Panc1 (cell line): ENCODE measurements at regions of chr16 and their contacts with region 1.

Region 1: DNA sequence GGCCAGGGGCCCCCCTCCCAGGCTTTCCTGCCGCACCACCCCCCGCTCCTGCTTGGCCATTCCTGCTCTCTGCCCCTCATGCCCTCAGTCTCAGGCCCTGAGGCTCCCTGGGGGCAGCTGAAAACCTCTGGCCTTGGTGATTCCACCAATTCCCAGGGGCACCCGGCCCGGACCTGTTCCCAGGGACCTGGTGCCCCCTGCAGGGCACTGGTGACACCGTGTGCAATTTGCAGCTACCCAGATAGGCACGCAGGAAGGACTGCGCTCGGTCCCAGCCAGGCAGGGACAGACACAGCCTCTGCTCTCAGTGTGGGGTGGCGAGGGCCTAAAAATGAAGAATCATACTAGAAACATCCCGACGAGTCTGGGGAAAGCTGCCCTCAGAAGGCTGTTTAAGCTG is 13.4 kb downstream of the WFDC1 start:
- DNase-seq: no peak
- ATAC-seq: peak; percentile 92
- H3K4me3 ChIP-seq: no peak overlapping the region
- H3K27ac ChIP-seq: no peak overlapping the region
- H3K4me1 ChIP-seq: no peaks in the 10 kb centered on the region
- H3K27me3 ChIP-seq: no peaks in the 10 kb centered on the region; the same call in 1 of the 2 replicates
- CTCF ChIP-seq: peak; percentile 75; the same call in 1 of the 2 replicates

Region 2: GRCh38 chr16:84277237-84277823 is 30.8 kb before region 1 on chr16:
- CTCF ChIA-PET with region 1: interaction called, 10 read pairs
- POLR2A ChIA-PET with region 1: no interaction called
- in situ Hi-C with region 1: no loop called
- intact Hi-C with region 1: no loop called
- DNase-seq: no peak
- ATAC-seq: peak; percentile 87
- H3K4me3 ChIP-seq: no peak overlapping the region
- H3K27ac ChIP-seq: no peak overlapping the region
- H3K4me1 ChIP-seq: no peaks in the 10 kb centered on the region
- H3K27me3 ChIP-seq: no peaks in the 10 kb centered on the region; the same call in 1 of the 2 replicates
- CTCF ChIP-seq: peak; percentile 88

Region 3: GRCh38 chr16:84446596-84447392 is 138.7 kb after region 1 on chr16:
- CTCF ChIA-PET with region 1: no interaction called
- POLR2A ChIA-PET with region 1: no interaction called
- in situ Hi-C with region 1: no loop called
- intact Hi-C with region 1: no loop called
- DNase-seq: no peak
- ATAC-seq: no peak
- H3K4me3 ChIP-seq: no peak overlapping the region
- H3K27ac ChIP-seq: no peak overlapping the region
- H3K4me1 ChIP-seq: no peaks in the 10 kb centered on the region
- H3K27me3 ChIP-seq: no peaks in the 10 kb centered on the region
- CTCF ChIP-seq: no peak